Activated CD4-positive, alpha-beta memory T cell treated with anti-CD3 and anti-CD28 coated beads, Interleukin-2, amount 10 ng/mL, durations not matched to agents 7 days and 5 days (primary cell): ENCODE measurements at regions of chr6 and their contacts with region 1.

Region 1: DNA sequence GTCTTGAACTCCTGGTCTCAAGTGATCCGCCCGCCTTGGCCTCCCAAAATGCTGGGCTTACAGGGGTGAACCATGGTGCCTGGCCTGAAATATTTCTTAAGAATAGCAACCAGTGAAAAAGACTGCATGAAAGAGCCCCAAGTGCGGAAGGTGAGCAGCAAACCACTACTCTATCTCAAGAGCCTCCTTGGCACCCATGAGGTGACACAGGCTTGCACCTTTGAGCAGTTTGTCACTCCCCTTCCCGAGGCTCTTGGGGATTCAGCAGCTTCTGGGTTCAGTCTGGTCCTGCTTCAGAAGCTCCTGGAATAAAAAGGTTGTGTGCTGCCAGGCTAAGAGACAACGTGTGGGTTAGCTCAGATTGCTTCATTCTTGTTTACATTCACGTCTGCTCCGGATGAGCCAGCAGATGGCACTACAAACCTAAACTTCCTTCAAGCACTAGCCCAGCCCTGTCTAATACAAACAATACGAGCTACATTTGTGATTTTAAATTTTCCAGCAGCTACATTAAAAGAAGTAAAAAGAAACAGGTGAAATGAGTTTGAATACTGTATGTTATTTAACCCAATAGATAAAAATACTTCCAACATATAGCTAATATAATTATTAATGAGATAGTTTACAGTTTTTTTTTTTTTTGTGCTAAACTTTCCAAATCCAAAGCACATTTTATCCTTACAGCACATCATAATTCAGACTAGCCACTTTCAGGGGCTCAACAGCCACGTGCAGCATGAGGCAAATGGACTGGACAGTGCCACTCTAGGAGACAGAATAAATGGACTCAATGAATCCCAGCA is 46.2 kb downstream of the GJA10 start:
- DNase-seq: peak; percentile 80
- H3K4me3 Mint-ChIP-seq: no peak overlapping the region
- H3K27ac Mint-ChIP-seq: no peak overlapping the region
- H3K4me1 Mint-ChIP-seq: peaks cover 22% of the 10 kb centered on the region
- H3K27me3 Mint-ChIP-seq: no peaks in the 10 kb centered on the region

Region 2: GRCh38 chr6:89970609-89971337 is 30.3 kb after region 1 on chr6:
- CTCF ChIA-PET with region 1: interaction called, 12 read pairs
- POLR2A ChIA-PET with region 1: no interaction called
- DNase-seq: no peak
- H3K4me3 Mint-ChIP-seq: no peak overlapping the region
- H3K27ac Mint-ChIP-seq: no peak overlapping the region
- H3K4me1 Mint-ChIP-seq: peaks cover 5% of the 10 kb centered on the region
- H3K27me3 Mint-ChIP-seq: no peaks in the 10 kb centered on the region

Region 3: DNA sequence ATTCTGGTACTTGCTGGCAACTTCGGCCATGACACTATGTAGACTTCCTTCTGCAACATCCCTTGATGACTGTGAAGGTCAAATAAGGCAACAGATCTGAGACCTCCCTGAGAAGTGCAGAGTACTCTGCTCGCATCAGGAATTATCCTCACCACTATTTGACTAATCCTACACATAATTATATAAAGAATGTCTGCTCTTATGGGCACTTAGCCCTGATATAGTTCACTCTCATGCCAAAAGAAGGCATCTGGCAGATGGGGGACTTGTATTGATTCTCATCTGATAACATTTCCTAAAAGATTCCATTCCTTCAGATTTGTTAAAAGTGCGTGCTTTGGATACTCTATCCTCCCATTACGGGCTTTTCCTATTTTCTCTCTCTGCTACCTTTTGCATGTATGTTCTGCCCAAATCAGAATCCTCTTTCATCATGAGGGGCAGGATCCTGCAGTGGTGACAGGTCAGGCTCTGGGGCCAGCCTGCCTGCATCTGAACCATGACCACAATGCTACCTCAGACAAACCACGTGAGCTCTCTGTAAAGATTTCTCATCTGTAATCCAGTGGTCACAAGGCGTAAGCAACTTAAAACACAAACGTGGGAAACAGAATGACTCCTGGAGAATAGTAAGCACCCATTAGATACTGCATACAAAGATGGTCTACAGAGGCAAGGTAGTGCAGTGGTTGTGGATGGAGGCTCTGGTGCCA is 87.8 kb after region 1 on chr6:
- CTCF ChIA-PET with region 1: no interaction called
- POLR2A ChIA-PET with region 1: no interaction called
- DNase-seq: peak; percentile 34
- H3K4me3 Mint-ChIP-seq: no peak overlapping the region
- H3K27ac Mint-ChIP-seq: no peak overlapping the region
- H3K4me1 Mint-ChIP-seq: peaks cover 53% of the 10 kb centered on the region
- H3K27me3 Mint-ChIP-seq: no peaks in the 10 kb centered on the region

Region 4: DNA sequence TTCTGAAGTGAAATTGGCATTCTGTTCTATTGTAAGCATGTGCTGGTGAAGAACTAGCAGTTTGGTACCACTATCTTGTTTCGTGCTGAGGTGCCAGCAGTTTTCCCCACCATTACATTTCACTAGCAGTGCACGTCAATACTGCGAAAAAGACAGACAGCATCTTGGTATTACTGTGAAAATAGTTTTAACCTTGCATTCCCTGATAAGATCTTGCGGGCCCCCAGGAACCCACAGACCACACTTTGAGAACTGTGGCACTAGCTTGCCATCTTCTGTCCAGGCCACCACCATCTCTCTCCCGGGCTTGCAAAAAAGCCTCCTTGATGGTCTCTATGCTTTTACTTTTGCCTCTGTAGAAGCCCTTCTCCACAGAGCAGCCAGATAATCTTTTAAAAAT is 170.5 kb after region 1 on chr6:
- CTCF ChIA-PET with region 1: interaction called, 20 read pairs
- POLR2A ChIA-PET with region 1: interaction called, 5 read pairs
- DNase-seq: peak; percentile 88
- H3K4me3 Mint-ChIP-seq: no peak overlapping the region
- H3K27ac Mint-ChIP-seq: peak overlapping the region; percentile 63
- H3K4me1 Mint-ChIP-seq: peaks cover 56% of the 10 kb centered on the region
- H3K27me3 Mint-ChIP-seq: peaks cover 18% of the 10 kb centered on the region

Region 5: GRCh38 chr6:90184334-90185298 is 244.2 kb after region 1 on chr6:
- CTCF ChIA-PET with region 1: interaction called, 46 read pairs
- POLR2A ChIA-PET with region 1: no interaction called
- DNase-seq: no peak
- H3K4me3 Mint-ChIP-seq: no peak overlapping the region
- H3K27ac Mint-ChIP-seq: no peak overlapping the region
- H3K4me1 Mint-ChIP-seq: peaks cover 36% of the 10 kb centered on the region
- H3K27me3 Mint-ChIP-seq: no peaks in the 10 kb centered on the region

Region 6: GRCh38 chr6:90478789-90479602 is 538.6 kb after region 1 on chr6:
- CTCF ChIA-PET with region 1: interaction called, 192 read pairs
- POLR2A ChIA-PET with region 1: interaction called, 5 read pairs
- DNase-seq: peak; percentile 85
- H3K4me3 Mint-ChIP-seq: no peak overlapping the region
- H3K27ac Mint-ChIP-seq: peak overlapping the region; percentile 67
- H3K4me1 Mint-ChIP-seq: peaks cover 54% of the 10 kb centered on the region
- H3K27me3 Mint-ChIP-seq: peaks cover 2% of the 10 kb centered on the region